ENCODE measurements at regions of chr12 and their contacts with region 1.

Region 1: GRCh38 chr12:50174971-50175715 is 8.0 kb upstream of the CERS5 start:
- DNase-seq: no peak
- ATAC-seq: peak in 2 of 4 donors; percentile 48 to 76
- H3K4me3 ChIP-seq: no peak overlapping the region
- H3K27ac ChIP-seq: no peak overlapping the region
- H3K4me1 ChIP-seq: no peaks in the 10 kb centered on the region
- H3K27me3 ChIP-seq: no peaks in the 10 kb centered on the region
- CTCF ChIP-seq: peak; percentile 74

Region 2: GRCh38 chr12:49974231-49974675 is 200.9 kb before region 1 on chr12:
- intact Hi-C with region 1: loop called in 1 of 2 experiments (anchors 10 kb)
- DNase-seq: peak; percentile 69 to 79
- ATAC-seq: peak; percentile 70 to 85 (median 82)
- H3K4me3 ChIP-seq: no peak overlapping the region
- H3K27ac ChIP-seq: no peak overlapping the region
- H3K4me1 ChIP-seq: no peaks in the 10 kb centered on the region
- H3K27me3 ChIP-seq: peaks cover 0 to 15% (median 0%) of the 10 kb centered on the region in 3 donors
- CTCF ChIP-seq: peak; percentile 42

Region 3: DNA sequence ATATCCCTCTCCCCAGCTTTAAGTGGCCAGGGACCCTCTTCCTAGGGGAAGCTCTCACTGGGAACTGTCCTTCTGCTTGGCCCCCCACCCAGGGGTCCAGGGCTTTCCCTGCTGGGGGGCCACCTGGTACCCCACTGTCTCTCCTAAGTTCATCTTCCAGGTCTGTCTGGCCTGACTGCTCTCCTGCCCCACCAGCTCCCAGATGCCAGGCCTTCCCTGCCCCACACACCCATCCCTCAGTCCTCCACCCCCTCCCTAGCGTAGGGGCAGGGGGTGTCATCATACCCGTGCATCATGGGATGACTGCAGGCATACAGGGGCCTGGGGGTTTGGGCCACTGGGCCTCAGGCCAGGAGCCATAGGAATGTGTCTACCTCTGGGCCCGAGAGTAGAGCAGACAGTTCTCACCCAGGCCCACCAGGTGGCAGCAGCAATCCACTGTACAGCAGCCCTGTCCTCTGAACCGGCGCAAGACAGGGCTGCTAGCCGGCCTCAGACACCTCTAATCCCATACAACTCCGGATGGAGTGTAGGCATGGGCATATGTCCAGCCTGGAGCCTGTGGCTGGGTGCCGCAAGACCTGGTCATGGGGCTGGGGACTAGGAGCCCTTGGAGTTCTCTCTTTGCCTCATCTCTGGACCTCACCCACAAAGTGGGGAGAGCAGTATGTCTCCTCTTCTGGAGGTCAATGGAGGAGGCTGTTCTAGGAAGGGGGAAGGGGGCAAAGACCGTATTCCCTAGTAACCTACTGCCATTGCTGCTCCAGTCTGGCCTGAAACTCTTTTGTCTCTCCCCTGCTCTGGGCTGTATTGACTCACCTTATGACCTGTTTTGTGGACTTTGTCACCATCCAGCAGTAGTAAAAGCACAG is 100.0 kb before region 1 on chr12:
- intact Hi-C with region 1: loop called (anchors 1 kb)
- DNase-seq: peak; percentile 85 to 92
- ATAC-seq: peak; percentile 92 to 95 (median 95)
- H3K4me3 ChIP-seq: no peak overlapping the region
- H3K27ac ChIP-seq: no peak overlapping the region
- H3K4me1 ChIP-seq: peaks cover 4% of the 10 kb centered on the region
- H3K27me3 ChIP-seq: no peaks in the 10 kb centered on the region
- CTCF ChIP-seq: peak; percentile 95

Region 4: GRCh38 chr12:50127546-50127945 is 47.6 kb before region 1 on chr12:
- intact Hi-C with region 1: loop called (anchors 5 kb)
- DNase-seq: no peak
- ATAC-seq: no peak
- H3K4me3 ChIP-seq: no peak overlapping the region
- H3K27ac ChIP-seq: no peak overlapping the region
- H3K4me1 ChIP-seq: no peaks in the 10 kb centered on the region
- H3K27me3 ChIP-seq: no peaks in the 10 kb centered on the region
- CTCF ChIP-seq: no peak

Region 5: DNA sequence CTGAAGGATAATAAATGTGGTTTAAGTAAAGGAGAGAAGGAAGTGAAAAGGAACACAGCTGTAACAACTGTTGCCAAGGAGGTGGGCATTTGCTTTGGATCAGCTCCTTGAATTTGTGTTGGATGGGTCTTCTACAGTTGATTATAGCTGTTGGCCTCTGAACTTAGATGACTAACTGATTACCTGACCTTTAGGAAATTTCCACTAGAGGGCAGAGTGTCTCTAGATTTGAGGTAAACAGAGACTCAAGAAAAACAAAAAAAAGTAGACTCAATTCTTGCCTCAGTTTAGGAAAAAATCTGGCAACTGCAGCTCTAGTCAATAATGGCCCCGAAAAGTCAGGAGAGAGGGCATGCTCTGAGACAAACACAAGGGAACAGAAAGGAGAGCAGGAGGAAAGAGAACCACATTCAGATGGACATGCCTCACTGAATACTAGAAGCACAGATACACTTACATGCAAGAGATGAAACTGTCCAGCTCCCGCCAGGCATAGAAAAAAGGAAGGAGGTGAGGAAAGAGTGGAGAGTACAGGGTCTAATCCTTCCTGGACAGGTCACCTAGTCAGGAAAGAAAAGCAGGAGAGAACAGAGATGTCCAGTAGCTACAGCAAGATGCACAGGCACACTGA is 42.5 kb before region 1 on chr12:
- intact Hi-C with region 1: loop called (anchors 5 kb)
- DNase-seq: no peak
- ATAC-seq: peak in 2 of 4 donors; percentile 30 to 67
- H3K4me3 ChIP-seq: no peak overlapping the region
- H3K27ac ChIP-seq: no peak overlapping the region
- H3K4me1 ChIP-seq: no peaks in the 10 kb centered on the region
- H3K27me3 ChIP-seq: no peaks in the 10 kb centered on the region
- CTCF ChIP-seq: peak; percentile 60

Region 6: DNA sequence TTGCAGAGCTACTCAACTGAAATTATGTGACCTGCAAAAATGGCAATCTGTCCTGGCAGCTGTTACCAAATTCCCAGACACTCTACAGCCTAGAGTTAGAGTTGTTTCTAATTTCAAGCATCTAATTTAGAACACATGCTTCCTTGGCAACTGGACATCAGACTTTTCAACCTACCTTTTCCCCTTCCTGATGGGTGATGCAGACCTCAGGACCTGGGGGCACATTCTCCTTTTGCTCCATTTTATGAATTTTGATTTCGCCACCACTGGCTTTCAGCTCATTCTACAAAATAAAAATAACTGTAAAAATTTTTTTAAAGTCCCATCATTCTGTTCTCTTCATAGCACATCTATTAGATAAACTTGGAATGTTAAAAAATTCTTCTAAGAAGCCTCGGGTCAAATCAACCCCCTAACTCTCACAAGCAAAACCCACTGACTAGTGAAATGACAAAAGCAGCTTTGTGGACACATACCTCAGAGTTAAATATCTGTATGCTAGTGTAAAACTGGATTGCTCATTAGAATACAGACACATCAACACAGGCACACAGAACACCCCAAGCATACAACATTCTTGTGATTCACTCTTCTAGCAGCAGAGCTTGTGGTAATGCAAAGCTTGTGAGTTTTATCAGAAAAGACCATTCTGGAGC is 25.6 kb after region 1 on chr12:
- intact Hi-C with region 1: no loop called
- DNase-seq: no peak
- ATAC-seq: no peak
- H3K4me3 ChIP-seq: no peak overlapping the region
- H3K27ac ChIP-seq: peak overlapping the region; percentile 1
- H3K4me1 ChIP-seq: peaks cover 24% of the 10 kb centered on the region
- H3K27me3 ChIP-seq: no peaks in the 10 kb centered on the region
- CTCF ChIP-seq: no peak

Measured in psoas muscle (tissue), 8 donors.